GM10248 (cell line): ENCODE measurements at regions of chr1 and their contacts with region 1.

Region 1: DNA sequence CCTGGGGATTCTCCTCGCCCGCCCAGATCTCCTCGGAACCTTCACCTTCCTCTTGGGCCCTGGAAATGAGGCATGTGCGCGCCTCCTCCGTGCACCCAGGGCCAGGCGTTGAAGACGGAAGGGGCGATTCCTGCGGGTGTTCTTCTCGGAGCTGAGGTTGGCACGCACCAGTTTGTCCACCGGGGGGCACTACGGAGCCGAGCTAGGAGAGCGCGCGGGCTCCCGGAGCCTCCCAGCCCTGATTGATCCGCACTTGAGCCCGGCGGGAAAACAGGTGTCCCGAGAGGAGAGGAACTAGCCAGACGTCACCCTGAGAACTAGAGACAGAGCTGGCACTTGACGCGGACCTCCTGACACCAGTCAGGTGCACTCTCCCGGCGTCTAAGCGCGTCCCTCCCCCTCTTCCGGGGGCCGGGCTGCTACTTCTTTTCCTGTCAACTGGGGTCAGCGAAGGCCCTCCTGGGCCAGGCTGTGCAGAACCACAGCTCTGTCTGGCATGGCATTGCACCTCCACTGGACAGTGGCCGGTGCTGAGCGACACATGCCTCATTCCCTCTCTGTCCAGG is 18.3 kb upstream of the SERINC2 start:
- DNase-seq: peak; percentile 88
- CTCF ChIP-seq: peak; percentile 93

Region 2: DNA sequence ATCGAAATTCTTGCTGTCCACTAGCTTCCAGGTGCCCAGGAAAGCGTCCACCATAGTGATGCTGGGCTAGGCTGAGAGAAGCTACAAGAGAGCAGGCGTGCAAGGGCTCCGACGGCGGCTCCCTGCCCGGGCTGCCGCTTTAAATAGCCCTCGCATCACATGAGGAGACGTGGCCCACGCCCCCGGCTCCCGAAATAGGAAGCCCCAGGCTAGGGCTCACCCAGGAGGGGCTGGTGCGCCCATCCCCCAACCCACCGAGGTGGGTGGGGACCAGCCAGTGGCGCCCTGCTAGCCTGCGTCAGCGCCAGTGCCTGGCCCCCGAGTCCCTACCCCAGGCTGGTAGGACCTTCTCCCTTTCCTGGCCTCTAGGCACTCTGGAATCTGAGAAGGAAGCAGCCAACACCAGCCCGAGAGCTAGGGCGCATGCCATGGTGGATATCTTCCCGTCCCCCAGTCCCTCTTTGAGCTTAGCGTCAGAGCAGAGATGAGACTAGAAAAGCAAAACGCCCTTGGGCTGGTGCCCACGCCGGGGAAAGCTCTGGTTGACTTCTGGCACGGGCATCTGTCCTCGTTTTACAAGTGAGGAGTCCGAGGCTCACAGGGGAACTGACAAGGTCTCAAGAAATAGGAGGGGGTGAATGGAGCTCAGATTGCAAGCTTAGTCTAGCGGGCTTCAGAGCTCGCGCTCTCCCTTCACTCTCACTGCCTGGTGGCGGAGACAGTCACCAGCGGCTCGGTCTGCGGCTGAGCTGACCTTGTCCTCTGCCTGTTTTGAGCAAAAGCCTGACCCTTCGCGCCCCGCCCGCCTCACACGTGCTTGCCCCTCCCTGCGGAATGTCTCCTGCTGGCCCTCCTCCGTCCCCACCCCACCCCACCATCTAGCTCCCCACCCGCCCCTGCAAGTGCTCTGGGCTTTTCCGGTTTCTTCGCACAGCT is 21.5 kb before region 1 on chr1 and contains the start of gene FABP3:
- CTCF ChIA-PET with region 1: interaction called, 46 read pairs
- POLR2A ChIA-PET with region 1: no interaction called
- DNase-seq: peak; percentile 66
- CTCF ChIP-seq: no peak

Region 3: DNA sequence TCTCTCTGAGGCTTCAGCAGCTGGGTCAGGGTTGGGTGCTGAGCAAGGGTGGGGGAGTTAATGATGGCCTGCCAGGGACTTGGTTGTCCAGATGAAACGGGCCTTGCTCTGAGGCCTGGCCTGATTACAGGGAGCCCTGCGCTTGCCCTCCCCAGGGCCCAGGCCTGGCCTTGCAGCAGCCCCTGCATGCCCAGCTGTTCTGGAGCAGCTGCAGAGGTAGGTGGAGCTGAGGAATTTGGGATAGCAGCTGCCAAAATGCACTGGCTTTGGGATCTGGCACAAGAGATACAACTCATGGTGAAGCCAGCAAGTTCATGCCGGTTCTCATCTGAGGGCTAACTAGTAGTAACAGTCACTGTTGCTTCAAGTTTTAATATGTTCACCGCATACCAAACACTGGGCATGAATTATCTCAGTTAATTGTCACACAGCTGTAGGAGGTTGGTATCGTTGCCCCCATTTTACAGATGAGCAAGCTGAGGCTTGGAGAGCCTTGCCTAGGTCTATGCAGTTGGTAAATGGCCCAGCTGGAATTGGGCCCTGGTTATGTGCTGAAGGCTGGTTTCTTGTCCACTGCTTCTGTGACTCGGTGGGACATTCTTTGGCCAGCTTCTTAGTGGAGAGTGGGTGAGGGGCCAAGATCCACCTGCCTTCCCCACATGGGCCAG is 11.0 kb after region 1 on chr1:
- CTCF ChIA-PET with region 1: interaction called, 21 read pairs
- POLR2A ChIA-PET with region 1: no interaction called
- DNase-seq: no peak
- CTCF ChIP-seq: no peak

Region 4: DNA sequence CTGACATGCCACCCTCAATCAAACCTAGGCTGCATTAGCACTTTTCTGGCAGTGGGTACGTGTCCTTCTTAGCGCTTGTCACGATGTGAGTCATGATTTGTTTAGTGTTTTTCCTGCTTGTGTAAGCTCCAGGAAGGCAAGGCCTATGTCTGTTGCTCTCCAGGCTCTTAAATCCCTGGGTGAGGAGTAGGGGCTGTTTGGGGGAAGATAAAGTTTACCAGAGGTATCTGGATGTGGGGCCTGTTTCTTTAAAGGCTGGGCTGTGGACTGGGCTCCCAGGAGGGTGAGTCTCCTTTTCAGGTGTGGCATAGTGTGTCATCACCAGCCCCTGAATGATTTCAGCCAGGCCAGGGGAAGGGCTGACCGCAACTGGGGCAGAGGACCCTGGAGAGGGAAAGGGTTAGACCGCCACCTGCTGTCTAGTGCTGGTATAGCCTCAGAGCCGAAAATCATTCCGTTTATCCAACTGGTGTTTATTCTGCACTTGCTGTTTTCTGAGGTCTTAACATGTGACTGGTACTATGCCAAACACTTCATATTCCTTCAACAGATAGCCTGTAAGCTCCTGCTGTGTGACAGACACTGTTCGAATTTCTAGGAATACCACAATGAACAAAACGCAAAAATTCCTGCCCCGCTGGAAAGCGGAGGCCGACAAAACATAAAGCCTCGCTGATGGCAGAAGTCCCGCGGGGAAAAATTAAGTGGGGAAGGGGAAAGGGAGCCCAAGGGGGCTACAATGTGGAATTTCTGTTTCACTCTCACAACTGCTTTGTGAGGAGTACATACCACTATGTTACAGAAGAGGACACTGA is 28.0 kb after region 1 on chr1:
- CTCF ChIA-PET with region 1: interaction called, 95 read pairs
- POLR2A ChIA-PET with region 1: interaction called, 5 read pairs
- DNase-seq: peak; percentile 78
- CTCF ChIP-seq: peak; percentile 81